Right ventricle myocardium inferior (tissue), 1 donor: ENCODE measurements at regions of chr3 and their contacts with region 1.

Region 1: GRCh38 chr3:169387751-169388696 is 275.5 kb downstream of the MECOM start:
- DNase-seq: peak; percentile 80
- ATAC-seq: peak; percentile 90

Region 2: DNA sequence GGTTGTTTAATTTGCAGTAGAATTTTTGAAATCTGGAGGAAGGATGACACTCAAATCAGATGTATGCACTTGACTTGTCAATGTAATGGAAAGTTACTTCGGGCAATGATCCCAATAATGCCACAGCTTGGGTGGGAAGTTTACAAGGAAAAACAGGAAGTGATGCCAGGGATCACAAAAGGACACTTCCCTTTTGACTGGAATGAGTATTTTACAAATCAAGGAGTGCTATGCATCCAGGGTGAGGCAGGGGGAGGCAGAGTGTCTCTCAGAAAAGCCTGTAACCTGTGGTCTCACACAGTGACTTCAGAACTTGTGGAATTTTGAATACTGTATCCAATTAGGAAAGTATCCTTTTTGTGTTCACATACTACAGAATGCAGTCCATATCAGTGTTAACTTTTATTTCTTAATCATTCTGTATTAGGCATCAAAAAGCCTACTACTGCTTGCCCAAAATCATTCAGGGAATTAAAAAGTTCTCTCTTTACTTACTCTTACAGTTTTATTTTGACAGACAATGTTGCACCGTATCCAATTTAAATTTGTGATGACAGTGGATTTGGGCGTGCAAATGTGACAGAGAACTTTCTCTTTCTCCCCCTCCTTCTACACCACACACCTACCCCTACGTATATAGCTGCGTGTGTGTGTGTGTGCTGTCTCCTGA is 169.6 kb before region 1 on chr3:
- intact Hi-C with region 1: loop called (anchors 5 kb)
- DNase-seq: no peak
- ATAC-seq: peak; percentile 68

Region 3: DNA sequence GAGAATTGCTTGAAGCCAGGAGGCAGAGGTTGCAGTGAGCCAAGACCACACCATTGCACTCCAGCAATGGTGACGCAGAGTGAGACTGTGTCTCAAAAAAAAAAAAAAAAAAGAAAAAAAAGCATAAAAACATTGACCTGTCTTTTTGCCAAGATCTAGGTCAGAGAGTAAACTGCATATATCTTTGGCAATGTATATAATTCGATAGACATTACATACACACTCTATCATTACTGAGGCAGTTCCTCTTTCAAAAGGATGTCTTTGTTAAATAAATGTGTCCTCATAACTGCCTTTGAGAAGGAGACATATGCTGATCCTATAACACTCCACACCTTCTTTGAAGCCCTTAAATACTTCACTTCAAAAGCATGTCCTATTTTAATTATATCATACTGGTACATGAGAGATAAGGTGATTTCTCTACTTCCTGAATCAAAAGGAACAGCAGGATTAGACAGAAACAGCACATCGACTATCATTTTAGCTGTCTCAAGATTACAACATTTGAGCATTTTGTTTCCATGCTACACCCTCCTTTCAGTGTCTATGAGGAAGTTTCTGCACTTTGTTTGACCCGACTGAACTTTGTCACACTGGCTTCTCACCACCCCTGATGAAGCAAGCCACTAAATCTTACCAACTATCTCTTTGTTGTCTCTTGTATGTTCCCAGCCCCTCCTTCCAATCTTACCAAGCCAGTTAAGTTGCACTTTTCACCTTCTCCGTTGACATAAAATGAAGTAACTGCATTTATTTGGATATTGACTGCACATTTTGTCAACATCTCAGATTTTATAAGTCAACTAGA is 60.3 kb before region 1 on chr3:
- intact Hi-C with region 1: no loop called
- DNase-seq: no peak
- ATAC-seq: peak; percentile 35

Region 4: GRCh38 chr3:169430707-169431404 is 42.8 kb after region 1 on chr3:
- intact Hi-C with region 1: loop called (anchors 5 kb)
- DNase-seq: no peak
- ATAC-seq: peak; percentile 72